IMR-90 (cell line): ENCODE measurements at regions of chr4 and their contacts with region 1.

Region 1: DNA sequence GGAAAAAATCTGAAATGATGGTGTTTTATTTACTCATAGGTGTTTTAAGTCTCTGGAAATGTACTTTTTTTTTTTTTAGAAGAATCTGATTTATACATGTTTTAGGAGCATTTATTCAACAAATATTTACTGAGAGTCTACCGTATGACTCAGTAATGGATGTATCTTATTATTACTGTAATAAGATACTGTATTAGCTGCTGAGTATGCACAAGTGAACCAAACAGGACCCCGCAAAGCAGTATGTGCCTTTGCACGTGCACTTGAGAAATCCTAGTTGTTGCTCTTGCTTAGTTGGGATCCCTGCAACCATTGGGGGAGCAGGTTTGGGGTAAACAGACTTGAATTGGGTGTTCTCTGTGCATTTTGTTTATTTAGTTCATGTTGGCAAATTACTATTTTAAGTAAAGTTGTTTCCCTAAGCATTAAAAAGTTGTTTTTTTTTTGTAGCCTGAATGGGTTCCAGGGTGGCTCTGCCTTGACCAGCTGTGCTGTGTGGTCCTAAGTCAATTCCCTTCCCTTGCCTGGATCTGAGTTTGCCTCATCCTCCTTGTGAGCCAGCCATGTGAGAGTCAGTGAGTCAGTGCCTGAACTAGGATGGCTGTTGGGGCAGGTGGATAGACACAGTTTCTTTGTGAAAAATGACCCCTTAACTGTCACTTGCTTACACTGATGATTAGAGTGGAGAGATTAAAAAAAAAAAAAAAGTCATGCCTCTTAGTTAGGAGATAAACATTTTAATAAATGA is 27.7 kb downstream of the DCUN1D4 start:
- DNase-seq: peak; percentile 56
- ATAC-seq: peak; percentile 64; the same call in 1 of the 2 replicates
- H3K4me3 ChIP-seq: no peak overlapping the region
- H3K27ac ChIP-seq: no peak overlapping the region
- H3K4me1 ChIP-seq: peaks cover 10% of the 10 kb centered on the region
- H3K27me3 ChIP-seq: no peaks in the 10 kb centered on the region
- CTCF ChIP-seq: no peak
- POLR2A ChIP-seq: no peak
- RAD21 ChIP-seq: no peak

Region 2: GRCh38 chr4:51842554-51843308 is 27.9 kb before region 1 on chr4 and contains the start of gene DCUN1D4:
- CTCF ChIA-PET with region 1: no interaction called
- POLR2A ChIA-PET with region 1: interaction called, 3 read pairs
- dilution Hi-C with region 1: no loop called
- in situ Hi-C with region 1: no loop called
- intact Hi-C with region 1: loop called (anchors 1 kb)
- DNase-seq: peak; percentile 99
- ATAC-seq: peak; percentile 91
- H3K4me3 ChIP-seq: peak within 1 kb of the TSS; percentile 80
- H3K27ac ChIP-seq: peak within 1 kb of the TSS; percentile 96
- H3K4me1 ChIP-seq: peaks cover 1% of the 10 kb centered on the region; the same call in 1 of the 2 replicates
- H3K27me3 ChIP-seq: no peaks in the 10 kb centered on the region
- CTCF ChIP-seq: peak; percentile 59
- POLR2A ChIP-seq: peak; percentile 46; the same call in 1 of the 2 replicates
- RAD21 ChIP-seq: no peak
- total RNA-seq, gene DCUN1D4: 37.8 and 44.3 TPM in 2 replicates

Region 3: GRCh38 chr4:51906167-51906958 is 35.7 kb after region 1 on chr4:
- CTCF ChIA-PET with region 1: no interaction called
- POLR2A ChIA-PET with region 1: no interaction called
- dilution Hi-C with region 1: no loop called
- in situ Hi-C with region 1: no loop called
- intact Hi-C with region 1: loop called (anchors 2 kb)
- DNase-seq: peak; percentile 47
- ATAC-seq: peak; percentile 24; the same call in 1 of the 2 replicates
- H3K4me3 ChIP-seq: no peak overlapping the region
- H3K27ac ChIP-seq: peak overlapping the region; percentile 18; the same call in 1 of the 2 replicates
- H3K4me1 ChIP-seq: peaks cover 2% of the 10 kb centered on the region; the same call in 1 of the 2 replicates
- H3K27me3 ChIP-seq: no peaks in the 10 kb centered on the region
- CTCF ChIP-seq: no peak
- POLR2A ChIP-seq: no peak
- RAD21 ChIP-seq: no peak

Region 4: DNA sequence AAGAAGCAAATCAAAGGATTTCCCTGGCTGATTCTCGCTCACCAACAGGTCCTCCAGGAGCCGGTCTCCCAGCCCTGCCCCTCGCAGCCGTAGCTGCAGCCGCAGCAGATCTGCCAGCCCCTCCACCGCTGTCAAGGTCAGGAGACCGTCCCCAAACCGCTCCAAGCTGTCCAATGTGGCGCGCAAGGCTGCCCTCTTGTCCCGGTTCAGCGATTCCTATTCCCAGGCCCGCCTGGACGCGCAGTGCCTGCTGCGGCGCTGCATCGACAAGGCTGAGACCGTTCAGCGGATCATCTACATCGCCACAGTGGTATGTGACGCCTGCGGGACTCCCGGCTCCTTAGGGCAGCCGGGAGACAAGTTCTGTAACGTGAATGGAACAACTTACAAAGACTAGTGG is 206.1 kb after region 1 on chr4:
- CTCF ChIA-PET with region 1: no interaction called
- POLR2A ChIA-PET with region 1: no interaction called
- dilution Hi-C with region 1: no loop called
- in situ Hi-C with region 1: no loop called
- intact Hi-C with region 1: no loop called
- DNase-seq: no peak
- ATAC-seq: peak; percentile 89
- H3K4me3 ChIP-seq: no peak overlapping the region
- H3K27ac ChIP-seq: no peak overlapping the region
- H3K4me1 ChIP-seq: no peaks in the 10 kb centered on the region
- H3K27me3 ChIP-seq: peaks cover 7% of the 10 kb centered on the region; the same call in 1 of the 2 replicates
- CTCF ChIP-seq: no peak
- POLR2A ChIP-seq: no peak
- RAD21 ChIP-seq: no peak

Region 5: GRCh38 chr4:52343595-52343994 is 473.0 kb after region 1 on chr4:
- CTCF ChIA-PET with region 1: no interaction called
- POLR2A ChIA-PET with region 1: no interaction called
- dilution Hi-C with region 1: no loop called
- in situ Hi-C with region 1: no loop called
- intact Hi-C with region 1: no loop called
- DNase-seq: no peak
- ATAC-seq: no peak
- H3K4me3 ChIP-seq: no peak overlapping the region
- H3K27ac ChIP-seq: no peak overlapping the region
- H3K4me1 ChIP-seq: no peaks in the 10 kb centered on the region
- H3K27me3 ChIP-seq: no peaks in the 10 kb centered on the region
- CTCF ChIP-seq: no peak
- POLR2A ChIP-seq: no peak
- RAD21 ChIP-seq: no peak